Common myeloid progenitor, CD34-positive (primary cell): ENCODE measurements at regions of chr12 and their contacts with region 1.

Region 1: DNA sequence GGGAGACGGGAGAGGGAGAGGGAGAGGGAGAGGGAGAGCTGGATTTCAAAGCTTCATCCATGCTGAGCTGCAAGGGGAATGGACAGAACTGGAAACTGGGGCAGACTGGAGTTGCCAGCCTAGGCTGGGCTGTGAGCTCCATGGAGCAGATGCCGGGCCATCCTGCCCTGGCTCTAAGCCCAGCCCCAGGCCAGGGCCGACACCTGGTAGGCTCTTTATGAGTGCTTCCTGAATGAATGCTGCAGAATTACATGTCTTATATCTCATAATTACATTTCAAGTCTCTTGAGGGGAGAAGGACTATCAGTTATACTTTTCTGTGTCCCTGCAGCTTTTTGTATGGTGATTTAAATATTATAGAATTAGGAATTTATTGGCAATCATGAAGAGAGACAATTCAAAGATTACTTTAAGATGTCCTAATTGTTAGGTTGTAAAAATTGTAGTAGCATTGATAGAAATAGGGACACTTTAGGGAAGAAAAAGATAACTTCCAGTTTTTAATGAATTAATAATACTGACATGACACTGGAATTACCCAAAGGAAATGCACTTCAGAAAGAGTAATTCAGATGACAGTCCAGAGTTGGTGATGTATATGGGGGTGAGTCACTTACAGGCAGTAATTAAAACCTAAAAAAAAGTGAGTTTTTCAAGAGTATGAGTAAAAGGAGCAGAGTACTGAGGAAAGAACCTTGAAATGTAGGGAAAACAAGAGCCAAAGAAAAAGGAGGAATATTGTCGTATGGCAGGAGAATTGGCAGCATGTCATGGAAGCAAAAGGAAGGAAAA is 29.0 kb downstream of the SCYL2 start:
- DNase-seq: no peak
- H3K4me3 ChIP-seq: no peak overlapping the region
- H3K27ac ChIP-seq: no peak overlapping the region
- H3K4me1 ChIP-seq: no peaks in the 10 kb centered on the region
- H3K27me3 ChIP-seq: no peaks in the 10 kb centered on the region

Region 2: GRCh38 chr12:100234598-100235304 is 61.2 kb before region 1 on chr12:
- CTCF ChIA-PET with region 1: no interaction called
- POLR2A ChIA-PET with region 1: no interaction called
- DNase-seq: peak; percentile 41 to 62 (median 58)
- H3K4me3 ChIP-seq: no peak overlapping the region
- H3K27ac ChIP-seq: no peak overlapping the region
- H3K4me1 ChIP-seq: no peaks in the 10 kb centered on the region
- H3K27me3 ChIP-seq: no peaks in the 10 kb centered on the region

Region 3: GRCh38 chr12:100311317-100311716 is 15.4 kb after region 1 on chr12:
- CTCF ChIA-PET with region 1: no interaction called
- POLR2A ChIA-PET with region 1: interaction called, 10 read pairs
- DNase-seq: no peak
- H3K4me3 ChIP-seq: no peak overlapping the region
- H3K27ac ChIP-seq: no peak overlapping the region
- H3K4me1 ChIP-seq: no peaks in the 10 kb centered on the region
- H3K27me3 ChIP-seq: no peaks in the 10 kb centered on the region

Region 4: GRCh38 chr12:101945369-101946231 is 1649.6 kb after region 1 on chr12:
- CTCF ChIA-PET with region 1: no interaction called
- POLR2A ChIA-PET with region 1: no interaction called
- DNase-seq: no peak
- H3K4me3 ChIP-seq: no peak overlapping the region
- H3K27ac ChIP-seq: no peak overlapping the region
- H3K4me1 ChIP-seq: peaks cover 0 to 5% (median 2%) of the 10 kb centered on the region in 4 experiments
- H3K27me3 ChIP-seq: no peaks in the 10 kb centered on the region